T-cell (primary cell): ENCODE measurements at regions of chr2 and their contacts with region 1.

Region 1: GRCh38 chr2:118032169-118033013 is 18.5 kb upstream of the CCDC93 start:
- DNase-seq: peak in 24 of 35 experiments; percentile 5 to 64 (median 26)
- ATAC-seq: peak; percentile 54 to 69 (median 65)
- H3K4me3 ChIP-seq: no peak overlapping the region
- H3K4me3 Mint-ChIP-seq: no peak overlapping the region
- H3K27ac ChIP-seq: no peak overlapping the region
- H3K27ac Mint-ChIP-seq: no peak overlapping the region
- H3K4me1 ChIP-seq: no peaks in the 10 kb centered on the region
- H3K4me1 Mint-ChIP-seq: no peaks in the 10 kb centered on the region
- H3K27me3 ChIP-seq: peaks cover 3 to 8% of the 10 kb centered on the region in 2 experiments
- H3K27me3 Mint-ChIP-seq: peaks cover 43 to 44% of the 10 kb centered on the region in 2 donors

Region 2: DNA sequence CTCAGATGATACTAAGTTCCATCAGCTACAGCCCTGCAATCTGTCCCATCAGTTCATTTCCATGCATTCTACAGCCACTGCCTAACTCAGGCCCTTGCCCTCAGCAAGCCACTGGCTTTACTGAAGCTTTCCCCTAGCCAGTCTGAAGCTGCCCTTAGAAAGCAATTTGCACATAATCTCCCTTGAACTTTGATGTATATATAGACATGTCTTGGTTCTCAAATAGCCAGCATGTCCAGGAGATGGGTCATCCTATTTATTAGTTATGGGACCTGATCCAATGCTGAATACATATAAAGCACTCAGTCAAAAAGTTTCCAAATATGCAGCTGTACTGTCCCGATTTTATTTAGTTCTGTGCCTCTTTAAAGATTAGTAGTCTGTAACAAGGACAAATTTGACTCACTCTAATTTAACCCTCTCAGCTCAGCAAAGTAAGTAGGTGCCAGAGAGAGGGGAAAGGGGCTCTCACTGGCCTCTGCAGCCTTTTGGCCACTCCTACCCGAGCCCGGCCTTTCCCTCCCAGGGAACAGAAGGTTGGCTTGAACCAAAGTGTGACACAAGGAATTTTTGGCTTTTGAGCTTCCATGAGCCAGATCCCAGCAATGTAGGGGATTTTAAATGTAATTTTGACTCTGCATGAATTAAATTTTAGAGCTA is 89.2 kb before region 1 on chr2:
- CTCF ChIA-PET with region 1: no interaction called
- POLR2A ChIA-PET with region 1: no interaction called
- DNase-seq: no peak
- ATAC-seq: no peak
- H3K4me3 ChIP-seq: no peak overlapping the region
- H3K4me3 Mint-ChIP-seq: no peak overlapping the region
- H3K27ac ChIP-seq: no peak overlapping the region
- H3K27ac Mint-ChIP-seq: no peak overlapping the region
- H3K4me1 ChIP-seq: no peaks in the 10 kb centered on the region
- H3K4me1 Mint-ChIP-seq: no peaks in the 10 kb centered on the region
- H3K27me3 ChIP-seq: no peaks in the 10 kb centered on the region
- H3K27me3 Mint-ChIP-seq: no peaks in the 10 kb centered on the region

Region 3: DNA sequence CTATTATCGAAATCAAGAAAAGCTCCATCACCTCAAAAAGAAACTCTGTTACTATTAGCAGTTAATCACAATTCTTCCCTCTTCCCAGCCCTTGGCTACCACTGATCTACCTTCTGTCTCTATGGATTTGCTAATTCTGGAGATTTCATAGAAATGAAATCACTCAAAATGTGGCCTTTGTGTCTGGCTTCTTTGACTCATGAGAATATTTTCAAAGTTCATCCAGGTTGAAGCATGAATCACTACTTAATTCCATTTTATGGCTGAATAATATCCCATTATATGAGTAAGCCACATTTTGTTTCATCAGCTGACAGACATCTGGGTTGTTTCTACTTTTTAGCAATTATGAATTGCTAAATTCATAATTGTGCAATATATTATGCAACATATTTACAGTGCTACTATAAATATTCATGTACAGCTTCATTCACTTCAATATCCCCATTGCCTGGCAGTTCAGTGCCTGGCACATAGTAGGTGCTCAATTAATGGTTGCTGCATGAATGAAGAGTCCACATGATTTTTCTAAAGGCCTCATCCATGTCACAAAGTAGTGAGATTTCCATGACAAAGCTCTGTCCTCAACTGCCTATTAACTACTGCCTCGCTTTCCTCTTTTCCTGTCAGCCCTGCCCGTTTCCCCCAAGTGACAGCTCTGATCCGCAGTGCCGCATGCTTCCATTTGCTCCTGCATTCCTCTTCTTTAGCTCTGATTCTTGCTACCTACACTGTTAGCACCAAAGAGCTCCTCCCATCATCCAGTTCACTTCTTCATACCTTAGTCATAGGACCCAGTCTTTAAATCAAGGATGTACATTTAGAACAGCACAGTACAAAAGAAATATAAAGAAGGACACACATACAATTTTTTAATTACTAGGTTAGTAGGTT is 51.4 kb before region 1 on chr2:
- CTCF ChIA-PET with region 1: no interaction called
- POLR2A ChIA-PET with region 1: no interaction called
- DNase-seq: no peak
- ATAC-seq: no peak
- H3K4me3 ChIP-seq: no peak overlapping the region
- H3K4me3 Mint-ChIP-seq: no peak overlapping the region
- H3K27ac ChIP-seq: no peak overlapping the region
- H3K27ac Mint-ChIP-seq: no peak overlapping the region
- H3K4me1 ChIP-seq: no peaks in the 10 kb centered on the region
- H3K4me1 Mint-ChIP-seq: peaks cover 0 to 5% (median 5%) of the 10 kb centered on the region in 3 donors
- H3K27me3 ChIP-seq: no peaks in the 10 kb centered on the region
- H3K27me3 Mint-ChIP-seq: no peaks in the 10 kb centered on the region

Region 4: DNA sequence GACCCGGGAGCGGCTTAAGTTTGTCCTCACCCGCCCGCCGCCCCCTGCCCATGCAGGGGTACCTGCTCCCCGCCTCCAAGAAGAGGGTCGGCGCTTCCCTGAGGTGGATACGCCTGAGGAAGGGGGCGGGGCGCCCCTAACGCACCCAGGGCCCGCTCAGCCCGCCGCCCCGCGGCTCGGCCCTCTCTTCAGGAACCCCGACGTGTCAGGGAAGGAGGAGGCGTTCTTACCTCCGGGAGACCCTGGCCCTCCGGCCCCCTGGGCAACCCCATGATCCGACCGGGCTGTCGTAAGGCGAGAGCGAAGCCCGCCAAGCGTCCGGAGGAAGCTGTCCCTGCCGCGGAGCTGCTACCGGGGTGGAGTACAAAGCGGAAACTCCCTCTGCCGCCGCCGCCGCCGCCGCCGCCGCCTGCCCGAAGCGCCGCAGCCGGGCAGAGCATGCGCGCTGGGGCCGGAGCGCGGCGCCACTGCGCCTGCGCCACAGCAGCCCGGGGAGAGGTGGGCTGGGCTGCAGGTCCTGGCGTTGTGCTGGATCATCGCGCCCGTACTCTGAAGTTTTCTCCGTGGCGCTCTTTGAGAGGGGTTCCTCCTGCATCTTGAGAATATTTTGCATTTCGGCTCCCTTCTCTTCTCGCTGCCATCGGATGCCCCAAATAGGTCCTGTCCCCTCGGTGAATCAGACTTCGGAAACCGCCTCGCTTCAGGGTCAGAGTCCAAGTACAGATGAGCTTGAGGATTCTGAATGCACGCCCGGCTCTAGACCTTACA is 18.5 kb before region 1 on chr2 and contains the start of gene CCDC93:
- CTCF ChIA-PET with region 1: interaction called, 6 to 11 read pairs
- POLR2A ChIA-PET with region 1: no interaction called
- DNase-seq: peak; percentile 69 to 95 (median 84)
- ATAC-seq: peak; percentile 89 to 90 (median 89)
- H3K4me3 ChIP-seq: peak within 1 kb of the TSS; percentile 86 to 99
- H3K4me3 Mint-ChIP-seq: peak within 1 kb of the TSS; percentile 90 to 94 (median 91)
- H3K27ac ChIP-seq: peak within 1 kb of the TSS; percentile 84
- H3K27ac Mint-ChIP-seq: peak within 1 kb of the TSS; percentile 84 to 92
- H3K4me1 ChIP-seq: peaks cover 11 to 23% of the 10 kb centered on the region in 2 experiments
- H3K4me1 Mint-ChIP-seq: peaks cover 46 to 49% (median 48%) of the 10 kb centered on the region in 3 donors
- H3K27me3 ChIP-seq: no peaks in the 10 kb centered on the region
- H3K27me3 Mint-ChIP-seq: peaks cover 2 to 5% of the 10 kb centered on the region in 2 donors
- total RNA-seq, gene CCDC93: 47.8 to 55.3 (median 50.5) TPM

Region 5: GRCh38 chr2:118019821-118020220 is 12.6 kb before region 1 on chr2:
- CTCF ChIA-PET with region 1: interaction called, 6 to 11 read pairs
- POLR2A ChIA-PET with region 1: no interaction called
- DNase-seq: no peak
- ATAC-seq: no peak
- H3K4me3 ChIP-seq: no peak overlapping the region
- H3K4me3 Mint-ChIP-seq: no peak overlapping the region
- H3K27ac ChIP-seq: no peak overlapping the region
- H3K27ac Mint-ChIP-seq: no peak overlapping the region
- H3K4me1 ChIP-seq: peaks cover 0 to 3% of the 10 kb centered on the region in 2 experiments
- H3K4me1 Mint-ChIP-seq: peaks cover 7 to 15% (median 10%) of the 10 kb centered on the region in 3 donors
- H3K27me3 ChIP-seq: peaks cover 2 to 4% of the 10 kb centered on the region in 2 experiments
- H3K27me3 Mint-ChIP-seq: peaks cover 5 to 18% of the 10 kb centered on the region in 2 donors

Region 6: GRCh38 chr2:118046634-118047210 is 14.3 kb after region 1 on chr2:
- CTCF ChIA-PET with region 1: interaction called, 7 to 10 read pairs
- POLR2A ChIA-PET with region 1: no interaction called
- DNase-seq: peak in 1 of 35 experiments; percentile 56
- ATAC-seq: no peak
- H3K4me3 ChIP-seq: no peak overlapping the region
- H3K4me3 Mint-ChIP-seq: no peak overlapping the region
- H3K27ac ChIP-seq: no peak overlapping the region
- H3K27ac Mint-ChIP-seq: no peak overlapping the region
- H3K4me1 ChIP-seq: no peaks in the 10 kb centered on the region
- H3K4me1 Mint-ChIP-seq: peaks cover 0 to 6% (median 0%) of the 10 kb centered on the region in 3 donors
- H3K27me3 ChIP-seq: peaks cover 4 to 5% of the 10 kb centered on the region in 2 experiments
- H3K27me3 Mint-ChIP-seq: peaks cover 56 to 71% of the 10 kb centered on the region in 2 donors

Region 7: GRCh38 chr2:118607641-118608040 is 575.2 kb after region 1 on chr2:
- CTCF ChIA-PET with region 1: no interaction called
- POLR2A ChIA-PET with region 1: no interaction called
- DNase-seq: no peak
- ATAC-seq: no peak
- H3K4me3 ChIP-seq: no peak overlapping the region
- H3K4me3 Mint-ChIP-seq: no peak overlapping the region
- H3K27ac ChIP-seq: no peak overlapping the region
- H3K27ac Mint-ChIP-seq: no peak overlapping the region
- H3K4me1 ChIP-seq: no peaks in the 10 kb centered on the region
- H3K4me1 Mint-ChIP-seq: no peaks in the 10 kb centered on the region
- H3K27me3 ChIP-seq: peaks cover 0 to 9% of the 10 kb centered on the region in 2 experiments
- H3K27me3 Mint-ChIP-seq: peaks cover 3 to 12% of the 10 kb centered on the region in 2 donors